ENCODE measurements at regions of chr14 and their contacts with region 1.

Region 1: GRCh38 chr14:105537369-105538164 is 11.2 kb downstream of the TMEM121 start:
- DNase-seq: peak in 4 of 5 donors; percentile 58 to 73 (median 61)
- H3K4me3 ChIP-seq: no peak overlapping the region
- H3K4me3 Mint-ChIP-seq: no peak overlapping the region
- H3K27ac ChIP-seq: no peak overlapping the region
- H3K27ac Mint-ChIP-seq: peak overlapping the region in 1 of 7 donors; percentile 78
- H3K4me1 ChIP-seq: peaks cover 7% of the 10 kb centered on the region
- H3K4me1 Mint-ChIP-seq: peaks cover 0 to 6% (median 3%) of the 10 kb centered on the region in 4 donors
- H3K27me3 ChIP-seq: no peaks in the 10 kb centered on the region
- H3K27me3 Mint-ChIP-seq: peaks cover 2 to 13% of the 10 kb centered on the region in 2 donors

Region 2: DNA sequence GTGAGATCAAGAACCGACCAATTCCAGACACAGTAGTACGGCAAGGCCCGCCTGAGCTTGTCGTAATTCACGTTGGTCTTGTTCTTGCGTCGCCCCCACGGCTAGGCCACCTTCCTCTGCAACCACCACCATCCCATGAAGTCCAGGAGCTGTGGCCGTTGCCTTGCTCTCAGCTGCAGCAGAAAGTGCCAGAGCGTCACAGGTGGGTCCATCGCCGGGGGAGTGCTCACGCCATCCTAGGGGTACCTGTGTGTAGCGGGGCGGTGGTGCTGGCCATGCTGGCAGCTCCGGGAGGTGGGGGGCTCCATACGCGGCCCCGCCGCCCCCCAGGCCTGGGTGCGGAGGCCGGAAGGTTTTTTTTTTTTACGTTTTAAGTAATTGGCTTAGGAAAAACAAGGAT is 11.9 kb after region 1 on chr14:
- CTCF ChIA-PET with region 1: interaction called, 12 read pairs
- POLR2A ChIA-PET with region 1: no interaction called
- intact Hi-C with region 1: no loop called
- DNase-seq: no peak
- H3K4me3 ChIP-seq: no peak overlapping the region
- H3K4me3 Mint-ChIP-seq: no peak overlapping the region
- H3K27ac ChIP-seq: no peak overlapping the region
- H3K27ac Mint-ChIP-seq: no peak overlapping the region
- H3K4me1 ChIP-seq: no peaks in the 10 kb centered on the region
- H3K4me1 Mint-ChIP-seq: no peaks in the 10 kb centered on the region
- H3K27me3 ChIP-seq: no peaks in the 10 kb centered on the region
- H3K27me3 Mint-ChIP-seq: peaks cover 4 to 21% of the 10 kb centered on the region in 2 donors